Psoas muscle (tissue), 8 donors: ENCODE measurements at regions of chr9 and their contacts with region 1.

Region 1: GRCh38 chr9:2260354-2261306 is 245.5 kb downstream of the SMARCA2 start:
- DNase-seq: no peak
- ATAC-seq: peak; percentile 54 to 91 (median 82)
- H3K4me3 ChIP-seq: no peak overlapping the region
- H3K27ac ChIP-seq: no peak overlapping the region
- H3K4me1 ChIP-seq: peaks cover 2% of the 10 kb centered on the region
- H3K27me3 ChIP-seq: no peaks in the 10 kb centered on the region
- CTCF ChIP-seq: no peak

Region 2: DNA sequence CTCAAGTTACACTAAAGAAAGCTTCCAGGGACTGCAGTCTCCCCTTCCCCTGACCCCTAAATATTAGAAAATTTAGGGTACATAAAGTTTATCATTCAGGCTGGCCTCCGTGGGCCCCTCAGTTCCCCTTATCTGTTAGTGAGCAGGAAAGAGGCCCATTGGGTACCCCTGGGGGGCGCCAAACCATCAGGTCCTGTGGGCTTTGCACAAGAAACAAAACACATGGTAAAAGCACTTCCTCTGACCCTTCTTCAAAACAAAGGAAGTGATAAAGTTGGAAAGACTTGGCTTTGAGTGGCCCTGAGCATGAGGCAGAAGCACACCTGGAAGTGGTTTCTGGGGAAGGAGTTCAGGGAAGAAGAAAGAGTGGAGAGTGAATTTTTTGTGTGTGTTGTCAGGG is 32.5 kb before region 1 on chr9:
- intact Hi-C with region 1: no loop called
- DNase-seq: peak in 1 of 2 donors; percentile 54
- ATAC-seq: peak in 3 of 4 donors; percentile 54 to 73 (median 65)
- H3K4me3 ChIP-seq: no peak overlapping the region
- H3K27ac ChIP-seq: no peak overlapping the region
- H3K4me1 ChIP-seq: peaks cover 5% of the 10 kb centered on the region
- H3K27me3 ChIP-seq: no peaks in the 10 kb centered on the region
- CTCF ChIP-seq: peak; percentile 46

Region 3: GRCh38 chr9:2321523-2322151 is 61.0 kb after region 1 on chr9:
- intact Hi-C with region 1: loop called in 1 of 2 experiments (anchors 10 kb)
- DNase-seq: no peak
- ATAC-seq: peak in 2 of 4 donors; percentile 45 to 50
- H3K4me3 ChIP-seq: no peak overlapping the region
- H3K27ac ChIP-seq: no peak overlapping the region
- H3K4me1 ChIP-seq: no peaks in the 10 kb centered on the region
- H3K27me3 ChIP-seq: no peaks in the 10 kb centered on the region
- CTCF ChIP-seq: peak; percentile 33